Testis (tissue), 5 donors: ENCODE measurements at regions of chr6 and their contacts with region 1.

Region 1: DNA sequence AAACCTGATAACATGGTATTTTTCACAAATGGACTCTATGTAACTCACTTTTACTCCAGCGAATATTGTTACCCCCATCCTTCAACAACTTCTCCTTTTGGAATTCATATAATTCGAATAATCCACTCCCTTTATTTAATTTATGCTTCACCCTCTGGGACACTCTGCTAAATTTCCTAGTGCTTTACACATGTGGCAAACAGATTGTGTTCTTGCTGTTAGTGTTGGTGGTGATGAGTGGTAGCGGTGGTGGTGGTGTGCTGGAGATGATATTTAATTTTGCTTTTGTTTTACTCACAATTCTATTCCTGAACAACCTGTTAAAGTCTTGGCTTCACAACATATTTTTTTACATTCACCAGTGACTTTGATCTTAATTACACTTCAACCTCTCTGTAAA is 32.8 kb downstream of the HTR1B start:
- DNase-seq: no peak
- H3K4me3 ChIP-seq: no peak overlapping the region
- H3K27ac ChIP-seq: no peak overlapping the region
- H3K4me1 ChIP-seq: no peaks in the 10 kb centered on the region
- H3K27me3 ChIP-seq: no peaks in the 10 kb centered on the region
- CTCF ChIP-seq: no peak
- POLR2A ChIP-seq: no peak

Region 2: GRCh38 chr6:76326866-76327265 is 1103.6 kb before region 1 on chr6:
- intact Hi-C with region 1: loop called (anchors 10 kb)
- DNase-seq: no peak
- H3K4me3 ChIP-seq: no peak overlapping the region
- H3K27ac ChIP-seq: no peak overlapping the region
- H3K4me1 ChIP-seq: no peaks in the 10 kb centered on the region
- H3K27me3 ChIP-seq: no peaks in the 10 kb centered on the region
- CTCF ChIP-seq: no peak
- POLR2A ChIP-seq: no peak

Region 3: GRCh38 chr6:77389402-77389801 is 41.1 kb before region 1 on chr6:
- intact Hi-C with region 1: no loop called
- DNase-seq: no peak
- H3K4me3 ChIP-seq: no peak overlapping the region
- H3K27ac ChIP-seq: no peak overlapping the region
- H3K4me1 ChIP-seq: no peaks in the 10 kb centered on the region
- H3K27me3 ChIP-seq: no peaks in the 10 kb centered on the region
- CTCF ChIP-seq: no peak
- POLR2A ChIP-seq: no peak

Region 4: DNA sequence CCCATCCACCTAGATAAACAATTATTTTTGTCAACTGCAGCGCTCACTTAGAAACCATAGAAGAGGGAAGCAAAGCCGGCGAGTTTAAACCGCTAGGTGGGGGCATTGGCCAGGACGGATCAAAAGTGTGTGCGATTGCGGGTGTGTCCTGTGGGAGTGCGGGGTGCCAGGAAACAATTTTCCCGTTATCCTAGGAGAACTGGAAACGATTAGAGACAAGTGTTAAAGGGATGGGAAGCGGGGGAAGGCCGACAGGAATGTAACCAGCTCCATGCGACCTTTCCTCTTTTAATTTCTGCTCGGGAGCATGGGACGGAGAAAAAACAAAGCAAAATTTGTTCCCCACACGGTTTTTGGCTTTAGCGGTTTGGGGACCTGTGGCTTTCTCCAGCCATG is 35.5 kb after region 1 on chr6:
- intact Hi-C with region 1: no loop called
- DNase-seq: peak; percentile 85
- H3K4me3 ChIP-seq: peak overlapping the region; percentile 53 to 64
- H3K27ac ChIP-seq: no peak overlapping the region
- H3K4me1 ChIP-seq: peaks cover 4% of the 10 kb centered on the region
- H3K27me3 ChIP-seq: no peaks in the 10 kb centered on the region
- CTCF ChIP-seq: peak; percentile 37 to 62 (median 53)
- POLR2A ChIP-seq: no peak